Activated CD4-positive, alpha-beta T cell treated with anti-CD3 and anti-CD28 coated beads, Interleukin-2, amount 10 ng/mL, durations not matched to agents 24 days and 14 days (primary cell): ENCODE measurements at regions of chr2 and their contacts with region 1.

Region 1: GRCh38 chr2:189287982-189288521 is 108.5 kb upstream of the COL5A2 start:
- DNase-seq: no peak
- H3K4me3 Mint-ChIP-seq: no peak overlapping the region
- H3K27ac Mint-ChIP-seq: peak overlapping the region; percentile 30
- H3K4me1 Mint-ChIP-seq: peaks cover 20% of the 10 kb centered on the region
- H3K27me3 Mint-ChIP-seq: no peaks in the 10 kb centered on the region

Region 2: DNA sequence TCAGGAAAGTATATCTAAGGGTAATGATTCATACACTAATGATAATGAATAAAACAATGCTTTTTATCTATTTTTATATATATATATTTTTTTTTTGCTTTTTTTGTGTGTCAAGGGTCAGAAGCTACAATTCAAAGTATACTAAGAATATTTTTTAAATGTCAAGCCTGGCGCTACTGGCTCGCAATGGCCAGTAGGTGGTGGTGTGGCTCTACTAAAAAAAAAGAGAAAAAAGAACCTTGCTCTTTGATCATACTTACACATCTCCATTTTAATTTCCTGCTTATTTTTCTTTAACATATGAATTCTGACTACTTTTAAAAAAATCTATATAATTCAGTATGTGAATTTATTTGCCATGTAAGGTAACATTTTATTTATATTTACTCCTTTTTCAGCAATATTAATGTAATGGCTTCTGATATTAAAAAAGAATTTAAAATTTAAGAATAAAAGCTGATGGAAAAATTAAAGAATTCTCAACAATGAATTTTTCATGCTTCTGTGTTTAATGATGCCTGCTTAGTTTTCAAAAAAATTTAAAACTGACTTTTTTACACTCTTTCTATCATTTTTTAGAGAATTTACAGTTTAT is 763.4 kb before region 1 on chr2:
- intact Hi-C with region 1: loop called (anchors 5 kb)
- DNase-seq: peak; percentile 67
- H3K4me3 Mint-ChIP-seq: no peak overlapping the region
- H3K27ac Mint-ChIP-seq: no peak overlapping the region
- H3K4me1 Mint-ChIP-seq: no peaks in the 10 kb centered on the region
- H3K27me3 Mint-ChIP-seq: peaks cover 2% of the 10 kb centered on the region

Region 3: DNA sequence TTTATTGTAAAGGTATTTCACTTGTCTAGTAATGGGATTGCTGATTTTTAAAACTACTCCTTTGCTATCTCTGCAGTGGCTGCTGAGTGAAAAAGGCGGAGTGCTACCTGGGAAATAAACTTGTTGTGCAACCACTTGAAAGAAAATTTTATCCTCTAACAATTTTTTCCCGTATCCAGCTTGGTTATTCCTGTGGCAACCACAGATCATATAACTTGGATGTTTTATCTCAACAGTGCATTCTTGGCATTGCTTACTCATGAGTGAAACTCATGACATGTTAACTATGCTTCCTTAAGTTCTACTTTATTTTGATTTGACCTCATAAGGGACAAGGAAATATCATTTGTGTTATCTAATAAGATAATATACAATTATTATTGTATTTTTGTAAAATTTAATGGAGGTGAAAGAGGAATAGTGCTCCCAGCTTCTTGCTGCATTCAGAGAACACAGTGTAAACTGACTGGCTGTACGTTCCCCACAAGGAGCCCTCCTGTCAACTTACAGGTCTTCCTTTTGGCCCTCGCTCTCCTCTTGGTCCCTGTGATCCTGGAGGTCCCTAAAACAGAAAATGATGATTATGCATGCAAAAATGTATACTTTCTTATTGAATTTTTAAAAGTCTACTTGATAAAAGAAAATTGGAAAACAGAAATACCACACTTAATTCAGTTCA is 191.1 kb before region 1 on chr2:
- intact Hi-C with region 1: loop called (anchors 1 kb)
- DNase-seq: no peak
- H3K4me3 Mint-ChIP-seq: no peak overlapping the region
- H3K27ac Mint-ChIP-seq: no peak overlapping the region
- H3K4me1 Mint-ChIP-seq: no peaks in the 10 kb centered on the region
- H3K27me3 Mint-ChIP-seq: no peaks in the 10 kb centered on the region

Region 4: DNA sequence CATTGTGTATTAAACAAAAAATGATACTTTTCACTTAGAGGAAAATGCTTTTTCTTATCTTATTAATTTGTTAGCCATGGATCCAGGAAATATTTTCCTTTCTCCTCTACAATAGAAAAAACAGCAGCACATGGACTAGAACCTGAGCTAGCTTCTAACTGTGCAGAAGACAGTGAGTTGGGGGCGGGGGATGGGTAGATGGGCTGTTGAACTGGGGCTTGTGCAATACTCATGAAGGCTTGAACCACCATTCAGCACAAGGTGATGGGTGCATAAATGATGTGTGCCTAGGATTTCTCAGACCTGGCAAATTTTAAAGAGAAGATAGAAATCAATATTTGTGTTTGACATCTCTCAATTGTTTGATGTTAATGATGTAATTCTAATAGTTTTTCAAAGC is 150.5 kb before region 1 on chr2:
- intact Hi-C with region 1: no loop called
- DNase-seq: no peak
- H3K4me3 Mint-ChIP-seq: no peak overlapping the region
- H3K27ac Mint-ChIP-seq: no peak overlapping the region
- H3K4me1 Mint-ChIP-seq: no peaks in the 10 kb centered on the region
- H3K27me3 Mint-ChIP-seq: no peaks in the 10 kb centered on the region

Region 5: GRCh38 chr2:189210250-189211075 is 77.6 kb before region 1 on chr2:
- intact Hi-C with region 1: loop called (anchors 5 kb)
- DNase-seq: no peak
- H3K4me3 Mint-ChIP-seq: no peak overlapping the region
- H3K27ac Mint-ChIP-seq: no peak overlapping the region
- H3K4me1 Mint-ChIP-seq: peaks cover 1% of the 10 kb centered on the region
- H3K27me3 Mint-ChIP-seq: no peaks in the 10 kb centered on the region

Region 6: DNA sequence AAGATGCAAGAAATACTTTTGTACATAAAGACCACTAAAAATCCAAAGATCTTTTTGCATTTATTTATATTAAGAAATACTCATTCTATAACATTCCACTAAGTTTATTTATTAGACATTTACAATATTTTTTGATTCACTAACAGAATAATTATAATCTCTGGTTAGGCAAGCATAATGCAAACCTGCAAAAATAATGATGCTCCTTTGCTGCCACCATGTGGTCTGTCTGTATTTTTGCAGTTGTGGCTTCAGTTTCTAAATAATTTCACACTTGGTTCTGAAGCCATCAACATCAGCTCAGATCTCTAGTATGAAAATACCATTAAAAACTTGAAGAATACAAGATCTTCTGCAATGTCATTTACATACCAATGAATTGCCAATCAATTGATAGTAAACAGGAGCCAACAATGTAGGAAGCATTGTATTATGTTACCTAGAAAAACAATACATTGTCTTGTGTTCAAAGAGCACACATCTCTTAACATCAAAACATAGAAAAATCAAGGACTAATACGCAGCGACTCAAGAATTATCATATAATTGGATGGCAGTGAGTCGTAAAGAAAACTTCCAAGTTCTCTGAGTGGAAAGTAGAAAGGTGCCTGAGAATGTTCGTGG is 124.4 kb after region 1 on chr2:
- intact Hi-C with region 1: loop called (anchors 1 kb)
- DNase-seq: peak; percentile 84
- H3K4me3 Mint-ChIP-seq: no peak overlapping the region
- H3K27ac Mint-ChIP-seq: no peak overlapping the region
- H3K4me1 Mint-ChIP-seq: peaks cover 6% of the 10 kb centered on the region
- H3K27me3 Mint-ChIP-seq: no peaks in the 10 kb centered on the region